ENCODE measurements at regions of chr5 and their contacts with region 1.

Region 1: DNA sequence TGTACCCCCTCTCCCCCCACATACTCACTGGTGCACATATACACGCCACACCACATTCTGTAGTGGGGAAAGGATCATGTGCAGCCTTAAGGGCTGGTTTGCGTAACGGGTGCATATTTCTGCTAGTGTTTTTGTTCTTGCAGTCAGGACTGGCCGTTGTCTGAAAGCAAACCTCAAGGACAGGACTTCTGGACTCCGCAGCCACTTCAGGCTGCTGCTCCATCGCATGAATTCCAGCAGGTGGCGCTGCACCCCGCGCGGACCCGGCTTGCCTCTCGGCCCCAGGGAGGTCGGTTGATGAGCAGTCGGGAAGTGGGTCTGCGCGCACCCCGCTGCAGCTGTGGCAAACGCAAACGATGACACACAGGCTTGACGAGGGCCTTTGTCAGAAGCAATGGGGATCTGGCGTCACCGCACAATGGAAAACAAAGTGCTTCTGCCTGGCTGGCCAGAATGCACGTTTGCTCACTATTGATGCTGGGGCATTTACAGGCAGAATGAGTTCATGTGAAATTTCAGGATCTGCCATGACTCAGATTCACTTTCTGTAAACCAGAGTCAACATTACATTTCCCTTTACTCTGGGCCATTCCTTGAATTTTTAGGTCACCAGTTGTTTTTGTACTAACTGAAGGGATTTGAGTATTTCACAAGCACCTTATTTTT is 36.3 kb upstream of the GLRX start:
- DNase-seq: peak; percentile 98
- H3K4me3 Mint-ChIP-seq: peak overlapping the region; percentile 30
- H3K27ac Mint-ChIP-seq: peak overlapping the region; percentile 83
- H3K4me1 Mint-ChIP-seq: peaks cover 52% of the 10 kb centered on the region
- H3K27me3 Mint-ChIP-seq: no peaks in the 10 kb centered on the region

Region 2: GRCh38 chr5:96065577-96066385 is 207.0 kb after region 1 on chr5:
- CTCF ChIA-PET with region 1: no interaction called
- intact Hi-C with region 1: loop called (anchors 1 kb)
- DNase-seq: peak; percentile 37
- H3K4me3 Mint-ChIP-seq: no peak overlapping the region
- H3K27ac Mint-ChIP-seq: peak overlapping the region; percentile 59
- H3K4me1 Mint-ChIP-seq: peaks cover 31% of the 10 kb centered on the region
- H3K27me3 Mint-ChIP-seq: no peaks in the 10 kb centered on the region

Region 3: DNA sequence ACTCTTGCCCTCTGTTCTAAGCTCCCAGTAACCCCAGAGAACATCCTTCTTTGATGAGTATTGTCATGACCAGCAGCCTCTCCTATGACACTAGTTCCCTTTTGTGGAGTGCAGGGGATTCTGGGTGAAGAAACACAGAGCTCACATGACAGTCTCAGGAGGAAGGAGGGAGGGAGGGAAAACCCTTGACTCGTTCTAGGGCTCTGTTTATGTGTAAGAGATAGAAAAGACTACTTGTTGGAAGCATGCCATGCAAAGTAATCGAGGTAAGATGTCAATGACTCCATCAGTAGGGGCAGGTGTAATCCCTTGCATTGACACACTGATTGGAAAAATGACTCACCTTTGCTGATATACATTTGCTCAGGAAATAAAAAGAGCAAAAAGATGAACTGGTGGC is 293.1 kb after region 1 on chr5:
- CTCF ChIA-PET with region 1: no interaction called
- intact Hi-C with region 1: loop called (anchors 1 kb)
- DNase-seq: peak; percentile 63
- H3K4me3 Mint-ChIP-seq: no peak overlapping the region
- H3K27ac Mint-ChIP-seq: peak overlapping the region; percentile 10
- H3K4me1 Mint-ChIP-seq: peaks cover 6% of the 10 kb centered on the region
- H3K27me3 Mint-ChIP-seq: no peaks in the 10 kb centered on the region

Region 4: GRCh38 chr5:96336351-96336985 is 477.7 kb after region 1 on chr5:
- CTCF ChIA-PET with region 1: interaction called, 46 read pairs
- intact Hi-C with region 1: loop called (anchors 1 kb)
- DNase-seq: peak; percentile 81
- H3K4me3 Mint-ChIP-seq: no peak overlapping the region
- H3K27ac Mint-ChIP-seq: no peak overlapping the region
- H3K4me1 Mint-ChIP-seq: peaks cover 18% of the 10 kb centered on the region
- H3K27me3 Mint-ChIP-seq: peaks cover 16% of the 10 kb centered on the region

Region 5: GRCh38 chr5:96595300-96596090 is 736.7 kb after region 1 on chr5:
- CTCF ChIA-PET with region 1: interaction called, 4 read pairs
- intact Hi-C with region 1: loop called (anchors 1 kb)
- DNase-seq: peak; percentile 36
- H3K4me3 Mint-ChIP-seq: no peak overlapping the region
- H3K27ac Mint-ChIP-seq: no peak overlapping the region
- H3K4me1 Mint-ChIP-seq: peaks cover 10% of the 10 kb centered on the region
- H3K27me3 Mint-ChIP-seq: peaks cover under 1% of the 10 kb centered on the region